ENCODE measurements at regions of chr7 and their contacts with region 1.

Region 1: GRCh38 chr7:44867073-44867995 is 18.0 kb downstream of the PURB start:
- DNase-seq: no peak
- H3K4me3 Mint-ChIP-seq: no peak overlapping the region
- H3K27ac Mint-ChIP-seq: peak overlapping the region; percentile 56
- H3K4me1 Mint-ChIP-seq: peaks cover 7% of the 10 kb centered on the region
- H3K27me3 Mint-ChIP-seq: no peaks in the 10 kb centered on the region
- CTCF ChIP-seq: no peak

Region 2: DNA sequence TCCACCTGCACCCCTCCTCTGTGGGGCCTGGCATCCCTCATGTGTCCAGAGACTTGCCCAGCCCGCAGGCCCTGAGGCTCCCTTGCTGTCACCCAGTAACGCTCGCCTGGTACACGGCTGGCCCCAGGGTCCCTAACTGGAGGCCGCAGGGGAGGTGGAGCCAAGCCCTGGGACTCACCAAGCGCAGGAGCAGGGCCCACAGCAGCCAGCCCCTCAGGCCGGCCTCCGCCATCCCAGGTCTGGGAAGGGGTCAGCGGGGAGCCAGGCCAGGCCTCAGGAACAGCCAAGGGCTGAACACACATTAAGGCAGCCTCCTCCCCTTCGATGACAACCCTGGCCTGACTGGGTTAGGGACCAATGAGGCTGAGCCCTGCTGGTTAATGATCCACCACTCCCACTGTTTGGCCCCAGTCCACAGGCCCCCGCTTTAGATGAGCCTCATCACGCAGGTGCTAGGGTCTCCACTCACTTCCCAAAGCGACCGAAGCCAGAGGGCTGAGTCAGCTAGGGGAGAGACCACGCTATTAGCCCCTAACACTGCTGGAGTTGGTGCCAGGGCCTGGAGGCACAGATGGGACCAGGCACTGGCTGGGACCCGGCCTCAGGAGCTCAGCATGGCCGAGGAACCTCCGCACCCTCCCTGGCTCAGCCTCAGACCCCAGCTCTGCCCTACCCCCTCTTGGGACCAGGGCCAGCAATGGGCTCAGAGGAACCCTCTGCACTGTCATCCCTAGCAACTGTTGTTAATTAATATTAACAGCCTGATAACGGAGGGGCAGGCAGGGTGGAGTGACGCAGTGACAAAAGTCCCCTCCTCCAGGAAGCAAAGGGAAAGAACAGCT is 326.1 kb before region 1 on chr7 and contains the start of gene NPC1L1:
- CTCF ChIA-PET with region 1: no interaction called
- intact Hi-C with region 1: no loop called
- DNase-seq: peak; percentile 90
- H3K4me3 Mint-ChIP-seq: peak within 1 kb of the TSS; percentile 78
- H3K27ac Mint-ChIP-seq: peak within 1 kb of the TSS; percentile 85
- H3K4me1 Mint-ChIP-seq: peaks cover 85% of the 10 kb centered on the region
- H3K27me3 Mint-ChIP-seq: no peaks in the 10 kb centered on the region
- CTCF ChIP-seq: no peak
- total RNA-seq, gene NPC1L1: 45.0 and 46.0 TPM in 2 replicates

Region 3: GRCh38 chr7:44847508-44847920 is 19.8 kb before region 1 on chr7:
- CTCF ChIA-PET with region 1: interaction called, 11 read pairs
- intact Hi-C with region 1: no loop called
- DNase-seq: peak; percentile 96
- H3K4me3 Mint-ChIP-seq: peak overlapping the region; percentile 82
- H3K27ac Mint-ChIP-seq: peak overlapping the region; percentile 98
- H3K4me1 Mint-ChIP-seq: peaks cover 30% of the 10 kb centered on the region
- H3K27me3 Mint-ChIP-seq: no peaks in the 10 kb centered on the region
- CTCF ChIP-seq: peak; percentile 97

Region 4: DNA sequence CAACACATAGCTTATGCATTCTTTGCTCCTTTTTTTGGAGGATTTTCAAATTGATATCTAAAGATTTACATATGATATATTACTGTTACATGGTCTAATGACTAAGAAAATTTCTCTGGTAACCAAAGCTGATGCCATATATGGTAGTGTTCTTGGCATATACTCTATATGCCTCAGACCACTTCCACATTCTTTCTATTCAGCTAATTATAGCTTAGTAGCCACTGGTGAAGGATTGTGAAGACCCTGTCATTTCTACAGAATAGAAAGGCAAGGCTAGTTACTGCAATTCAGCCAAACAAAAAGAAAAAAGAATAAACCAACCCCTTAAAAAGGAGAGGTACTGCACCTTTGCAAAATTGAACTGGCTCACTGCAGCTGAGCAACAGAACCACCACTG is 14.3 kb after region 1 on chr7:
- CTCF ChIA-PET with region 1: interaction called, 10 read pairs
- intact Hi-C with region 1: no loop called
- DNase-seq: no peak
- H3K4me3 Mint-ChIP-seq: peak overlapping the region; percentile 89
- H3K27ac Mint-ChIP-seq: peak overlapping the region; percentile 68
- H3K4me1 Mint-ChIP-seq: peaks cover 51% of the 10 kb centered on the region
- H3K27me3 Mint-ChIP-seq: no peaks in the 10 kb centered on the region
- CTCF ChIP-seq: no peak